Heart left ventricle (tissue), 16 donors: ENCODE measurements at regions of chr3 and their contacts with region 1.

Region 1: GRCh38 chr3:148861277-148861869 is 3.7 kb upstream of the CPA3 start:
- DNase-seq: no peak
- ATAC-seq: no peak
- H3K4me3 ChIP-seq: no peak overlapping the region
- H3K27ac ChIP-seq: no peak overlapping the region
- H3K4me1 ChIP-seq: no peaks in the 10 kb centered on the region
- H3K27me3 ChIP-seq: peaks cover 0 to 23% (median 3%) of the 10 kb centered on the region in 9 donors
- CTCF ChIP-seq: peak; percentile 63 to 85 (median 72)
- POLR2A ChIP-seq: no peak

Region 2: DNA sequence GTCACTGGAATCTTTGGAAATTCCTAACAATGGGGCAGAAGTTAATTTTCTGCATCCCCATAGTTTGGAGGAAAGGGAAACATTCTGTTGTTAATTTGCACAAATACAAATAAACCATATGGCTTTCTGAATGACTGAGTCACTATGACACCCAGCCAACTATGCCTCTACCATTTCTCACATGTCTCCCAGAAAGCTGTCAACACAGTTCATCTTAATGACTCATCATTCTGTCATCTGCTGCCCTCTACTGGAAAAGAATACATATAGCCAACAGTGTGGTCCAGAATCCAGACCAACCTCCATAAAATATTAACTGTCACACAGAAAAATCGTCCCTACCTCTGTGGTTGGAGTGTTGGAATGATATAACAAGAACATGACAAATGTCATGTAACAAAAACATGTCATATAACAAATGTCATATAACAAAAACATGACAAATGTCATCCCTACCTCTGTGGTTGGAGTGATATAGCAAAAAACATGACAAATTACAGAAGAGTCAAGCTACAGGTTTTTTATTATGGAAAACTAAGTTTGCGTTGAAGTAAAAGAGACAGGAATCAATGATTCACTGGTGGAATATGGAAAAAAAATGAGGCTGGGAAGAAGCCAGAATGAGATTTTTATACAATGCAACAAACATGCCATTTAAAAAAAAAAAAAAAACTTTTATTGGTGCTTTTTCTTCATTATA is 82.3 kb after region 1 on chr3:
- intact Hi-C with region 1: loop called (anchors 1 to 5 kb)
- DNase-seq: peak in 1 of 5 donors; percentile 21
- ATAC-seq: peak; percentile 70 to 93 (median 88)
- H3K4me3 ChIP-seq: no peak overlapping the region
- H3K27ac ChIP-seq: no peak overlapping the region
- H3K4me1 ChIP-seq: peaks cover 0 to 6% (median 0%) of the 10 kb centered on the region in 12 donors
- H3K27me3 ChIP-seq: no peaks in the 10 kb centered on the region
- CTCF ChIP-seq: peak; percentile 51 to 81 (median 66)
- POLR2A ChIP-seq: no peak